Endothelial cell of umbilical vein (primary cell): ENCODE measurements at regions of chr5 and their contacts with region 1.

Region 1: GRCh38 chr5:154857530-154858296 is 714 bp upstream of the CNOT8 start:
- DNase-seq: peak; percentile 97
- H3K4me3 ChIP-seq: peak overlapping the region; percentile 94 to 100 (median 95)
- H3K27ac ChIP-seq: peak overlapping the region; percentile 95
- H3K4me1 ChIP-seq: peaks cover 27% of the 10 kb centered on the region
- H3K27me3 ChIP-seq: no peaks in the 10 kb centered on the region
- CTCF ChIP-seq: peak in 1 of 2 donors; percentile 8
- POLR2A ChIP-seq: peak; percentile 82

Region 2: GRCh38 chr5:154445422-154446182 is 412.1 kb before region 1 on chr5 and contains the start of gene SAP30L:
- CTCF ChIA-PET with region 1: no interaction called
- POLR2A ChIA-PET with region 1: no interaction called
- dilution Hi-C with region 1: no loop called
- intact Hi-C with region 1: loop called (anchors 10 kb)
- DNase-seq: peak; percentile 97
- H3K4me3 ChIP-seq: peak within 1 kb of the TSS; percentile 82 to 98 (median 93)
- H3K27ac ChIP-seq: peak within 1 kb of the TSS; percentile 24
- H3K4me1 ChIP-seq: peaks cover 16% of the 10 kb centered on the region
- H3K27me3 ChIP-seq: no peaks in the 10 kb centered on the region
- CTCF ChIP-seq: no peak
- POLR2A ChIP-seq: peak; percentile 50
- total RNA-seq, gene SAP30L: 37.6 and 37.8 TPM in 2 replicates

Region 3: DNA sequence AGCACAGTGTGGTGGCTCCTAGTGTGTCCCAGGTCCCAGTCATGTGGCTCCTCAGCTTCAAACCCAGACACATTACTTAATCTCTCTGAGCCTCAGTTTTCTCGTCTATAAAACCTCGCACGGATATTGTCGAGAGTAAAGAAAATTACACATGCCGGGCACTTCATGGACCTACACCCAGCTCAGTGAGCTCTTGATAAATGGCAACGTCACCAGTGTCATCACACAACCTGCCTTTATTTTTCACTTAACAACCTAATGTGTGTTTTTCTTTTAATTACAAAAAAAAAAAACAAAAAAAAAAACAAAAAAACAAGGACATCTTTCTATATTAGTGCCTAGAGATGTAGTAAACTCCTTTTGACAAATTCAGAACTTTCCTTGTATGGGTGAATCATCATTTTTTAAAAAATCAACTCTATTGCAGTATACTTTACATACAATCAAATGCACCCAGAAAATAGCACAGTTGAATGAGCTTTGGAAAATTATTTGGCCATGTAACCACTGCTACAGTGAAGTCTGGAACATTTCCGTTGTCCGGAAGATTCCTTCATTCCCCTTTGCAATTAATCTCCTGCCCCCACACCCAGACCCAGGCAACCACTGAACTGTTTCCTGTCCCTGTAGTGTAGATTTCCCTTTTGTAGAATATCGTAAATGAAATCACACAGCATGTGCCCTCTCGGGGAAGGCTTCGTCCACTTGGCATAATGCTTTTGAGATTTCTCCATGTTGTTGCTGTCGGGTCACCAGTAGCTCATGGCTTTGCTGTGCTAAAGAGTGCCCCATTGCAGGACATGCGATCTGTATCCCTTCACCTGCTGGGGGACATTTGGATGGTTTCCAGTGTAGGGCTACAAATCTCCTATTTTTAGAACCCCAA is 203.0 kb before region 1 on chr5:
- CTCF ChIA-PET with region 1: interaction called, 12 read pairs
- POLR2A ChIA-PET with region 1: no interaction called
- dilution Hi-C with region 1: no loop called
- intact Hi-C with region 1: loop called (anchors 1 kb)
- DNase-seq: peak; percentile 79
- H3K4me3 ChIP-seq: peak overlapping the region in 1 of 3 experiments; percentile 50
- H3K27ac ChIP-seq: peak overlapping the region; percentile 86
- H3K4me1 ChIP-seq: peaks cover 22% of the 10 kb centered on the region
- H3K27me3 ChIP-seq: no peaks in the 10 kb centered on the region
- CTCF ChIP-seq: no peak
- POLR2A ChIP-seq: peak; percentile 57

Region 4: DNA sequence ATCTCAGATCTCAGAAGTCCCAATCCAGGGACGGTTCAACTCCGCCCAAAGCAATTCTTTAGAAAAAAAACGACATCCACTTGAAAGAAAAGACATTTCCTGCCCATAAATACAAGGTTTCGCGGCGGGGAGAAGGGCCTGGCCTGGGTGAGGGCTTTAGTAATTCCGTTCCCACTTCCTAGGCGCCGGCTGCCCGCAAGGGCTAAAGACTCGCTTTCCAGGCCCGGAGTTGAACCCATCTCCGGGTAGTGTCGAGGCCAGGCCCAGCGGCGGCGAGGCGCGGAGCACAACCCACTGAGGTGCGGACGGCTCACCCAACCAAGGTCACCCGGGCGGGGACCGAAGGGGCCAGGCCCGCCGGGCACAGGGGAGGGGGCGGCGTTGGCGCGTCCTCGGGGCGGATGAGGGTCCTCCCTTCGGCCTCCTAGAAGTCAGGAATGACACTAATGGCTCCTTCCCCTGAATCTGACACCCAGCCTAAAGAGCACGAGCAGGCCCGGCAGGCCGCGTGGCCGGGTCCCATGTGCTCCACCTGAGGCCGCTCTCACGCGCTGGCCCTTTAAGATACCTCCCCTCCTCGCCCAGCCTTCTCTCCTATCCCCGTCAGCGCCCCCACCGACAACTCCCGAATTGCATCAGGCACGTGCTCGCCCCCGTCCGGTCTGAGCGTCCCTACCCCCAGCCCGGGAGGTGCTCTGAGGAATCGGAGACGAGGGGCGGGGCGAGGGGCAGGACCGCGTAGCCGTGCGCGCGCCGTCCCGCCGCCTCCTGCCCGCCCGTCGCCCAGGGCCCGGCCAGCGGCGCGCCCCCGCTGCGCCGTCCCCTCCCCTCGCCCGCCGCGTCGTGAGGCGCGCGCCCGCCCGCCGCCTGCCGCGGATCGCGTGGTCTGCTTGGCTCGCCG is 103.0 kb before region 1 on chr5:
- CTCF ChIA-PET with region 1: interaction called, 3 read pairs
- POLR2A ChIA-PET with region 1: no interaction called
- dilution Hi-C with region 1: no loop called
- intact Hi-C with region 1: loop called (anchors 1 kb)
- DNase-seq: peak; percentile 99
- H3K4me3 ChIP-seq: peak overlapping the region; percentile 0 to 86 (median 7)
- H3K27ac ChIP-seq: peak overlapping the region; percentile 62
- H3K4me1 ChIP-seq: peaks cover 27% of the 10 kb centered on the region
- H3K27me3 ChIP-seq: no peaks in the 10 kb centered on the region
- CTCF ChIP-seq: peak; percentile 31 to 68
- POLR2A ChIP-seq: peak; percentile 80

Region 5: DNA sequence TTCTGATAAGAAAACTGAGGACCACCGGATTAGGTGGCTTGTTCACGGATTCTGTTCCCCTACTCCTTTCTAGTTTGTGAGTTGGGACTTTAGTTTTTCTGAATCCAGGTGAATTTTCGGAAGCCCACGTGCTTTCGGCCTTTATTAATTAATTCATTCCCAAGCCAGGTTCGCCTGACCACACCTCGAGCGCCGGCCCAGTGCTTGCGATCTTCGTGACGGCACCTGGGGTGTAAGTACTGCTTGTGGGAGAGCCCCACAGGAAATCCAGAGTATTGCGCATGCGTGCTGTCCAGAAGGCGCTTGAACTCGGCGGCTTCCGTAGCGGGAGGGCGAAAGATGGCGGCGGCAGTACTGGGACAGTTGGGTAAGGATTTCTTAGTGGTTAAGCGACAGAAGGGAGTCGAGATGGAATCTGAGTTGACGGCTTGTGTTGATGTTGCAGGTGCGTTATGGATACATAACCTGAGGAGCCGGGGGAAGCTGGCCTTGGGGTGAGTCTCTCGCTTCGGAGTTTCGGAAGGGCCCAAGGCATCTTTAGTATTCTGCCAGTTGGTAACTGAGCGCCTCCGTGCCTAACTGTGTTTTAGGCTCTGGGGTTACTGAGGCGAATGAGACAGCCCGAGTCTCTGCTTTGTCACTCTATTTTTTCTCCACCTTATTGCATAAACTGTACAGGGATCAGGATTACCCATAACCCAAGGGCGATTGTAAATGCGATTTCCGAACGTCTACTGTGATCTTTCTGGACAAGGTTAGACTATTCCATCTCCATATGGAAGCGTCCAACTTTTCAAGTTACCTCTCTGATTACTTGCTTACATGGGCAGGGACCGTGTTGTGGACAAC is 83.3 kb after region 1 on chr5 and contains the start of gene MRPL22:
- CTCF ChIA-PET with region 1: no interaction called
- POLR2A ChIA-PET with region 1: interaction called, 5 read pairs
- dilution Hi-C with region 1: no loop called
- intact Hi-C with region 1: loop called (anchors 2 kb)
- DNase-seq: peak; percentile 95
- H3K4me3 ChIP-seq: peak within 1 kb of the TSS; percentile 84 to 99 (median 91)
- H3K27ac ChIP-seq: peak within 1 kb of the TSS; percentile 81
- H3K4me1 ChIP-seq: peaks cover 56% of the 10 kb centered on the region
- H3K27me3 ChIP-seq: no peaks in the 10 kb centered on the region
- CTCF ChIP-seq: no peak
- POLR2A ChIP-seq: peak; percentile 86
- total RNA-seq, gene MRPL22: 90.8 and 112 TPM in 2 replicates